ENCODE measurements at regions of chr2 and their contacts with region 1.

Region 1: GRCh38 chr2:44361330-44362206 is at the starts of genes CAMKMT and PREPL:
- DNase-seq: peak; percentile 97 to 99 (median 98)
- ATAC-seq: peak; percentile 85
- H3K4me3 ChIP-seq: peak within 1 kb of the TSS; percentile 89
- H3K4me3 Mint-ChIP-seq: peak within 1 kb of the TSS; percentile 98
- H3K27ac ChIP-seq: peak within 1 kb of the TSS; percentile 95 to 100
- H3K27ac Mint-ChIP-seq: peak within 1 kb of the TSS; percentile 99
- H3K4me1 ChIP-seq: peaks cover 26% of the 10 kb centered on the region
- H3K4me1 Mint-ChIP-seq: peaks cover 64% of the 10 kb centered on the region
- H3K27me3 ChIP-seq: no peaks in the 10 kb centered on the region
- H3K27me3 Mint-ChIP-seq: no peaks in the 10 kb centered on the region
- CTCF ChIP-seq: no peak
- total RNA-seq, gene CAMKMT: 11.9 to 13.9 TPM
- total RNA-seq, gene PREPL: 30.0 to 31.4 TPM

Region 2: GRCh38 chr2:42810121-42810970 is 1551.2 kb before region 1 on chr2:
- CTCF ChIA-PET with region 1: no interaction called
- POLR2A ChIA-PET with region 1: interaction called, 22 read pairs
- intact Hi-C with region 1: loop called in 1 of 2 experiments (anchors 10 kb)
- DNase-seq: peak; percentile 92 to 99 (median 96)
- ATAC-seq: peak; percentile 78
- H3K4me3 ChIP-seq: peak overlapping the region; percentile 89
- H3K4me3 Mint-ChIP-seq: peak overlapping the region; percentile 98
- H3K27ac ChIP-seq: peak overlapping the region; percentile 93
- H3K27ac Mint-ChIP-seq: peak overlapping the region; percentile 100
- H3K4me1 ChIP-seq: peaks cover 27% of the 10 kb centered on the region
- H3K4me1 Mint-ChIP-seq: peaks cover 30% of the 10 kb centered on the region
- H3K27me3 ChIP-seq: no peaks in the 10 kb centered on the region
- H3K27me3 Mint-ChIP-seq: peaks cover 7% of the 10 kb centered on the region
- CTCF ChIP-seq: no peak

Region 3: GRCh38 chr2:43724728-43725526 is 636.6 kb before region 1 on chr2:
- CTCF ChIA-PET with region 1: no interaction called
- POLR2A ChIA-PET with region 1: no interaction called
- intact Hi-C with region 1: no loop called
- DNase-seq: no peak
- ATAC-seq: no peak
- H3K4me3 ChIP-seq: no peak overlapping the region
- H3K4me3 Mint-ChIP-seq: no peak overlapping the region
- H3K27ac ChIP-seq: no peak overlapping the region
- H3K27ac Mint-ChIP-seq: no peak overlapping the region
- H3K4me1 ChIP-seq: no peaks in the 10 kb centered on the region
- H3K4me1 Mint-ChIP-seq: no peaks in the 10 kb centered on the region
- H3K27me3 ChIP-seq: no peaks in the 10 kb centered on the region
- H3K27me3 Mint-ChIP-seq: peaks cover 4% of the 10 kb centered on the region
- CTCF ChIP-seq: no peak

Region 4: DNA sequence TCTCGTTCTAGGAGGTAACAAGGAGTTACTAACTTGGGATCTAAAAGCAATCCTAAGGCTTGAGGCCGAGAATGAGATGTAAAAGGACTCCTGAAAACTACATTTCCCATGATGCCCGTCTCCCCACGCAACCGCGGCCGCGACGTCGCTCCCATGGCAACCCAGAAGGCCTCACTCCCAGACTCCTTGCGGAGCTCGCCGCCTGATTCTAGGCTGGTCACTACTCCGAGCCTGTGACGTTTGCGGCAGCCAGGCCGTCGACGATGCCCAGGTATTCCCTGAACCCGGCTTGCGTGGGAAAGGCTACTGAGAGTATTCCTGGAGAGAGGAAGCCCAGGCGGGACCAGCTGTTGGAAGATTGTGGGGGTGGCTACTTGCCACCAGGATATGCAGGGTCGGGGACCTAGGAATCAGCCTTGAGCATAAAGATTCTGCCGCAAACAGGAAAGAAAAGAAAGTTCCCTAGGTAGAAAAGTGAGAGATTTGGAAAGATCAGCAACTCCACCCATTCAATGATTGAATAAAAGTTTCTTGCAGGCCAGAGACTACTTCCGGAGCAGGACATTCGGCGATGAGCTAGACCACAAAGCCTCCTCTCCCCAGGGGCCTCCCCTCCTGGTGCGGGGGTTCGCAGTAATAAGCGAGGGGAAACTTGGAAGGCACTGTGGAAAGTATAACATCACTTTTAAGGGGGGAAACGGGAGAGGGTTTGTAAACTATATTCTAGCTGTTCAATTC is 587.5 kb before region 1 on chr2 and contains the start of gene DYNC2LI1:
- CTCF ChIA-PET with region 1: no interaction called
- POLR2A ChIA-PET with region 1: no interaction called
- intact Hi-C with region 1: loop called in 1 of 2 experiments (anchors 10 kb)
- DNase-seq: peak; percentile 51 to 87 (median 66)
- ATAC-seq: peak; percentile 96
- H3K4me3 ChIP-seq: peak within 1 kb of the TSS; percentile 89
- H3K4me3 Mint-ChIP-seq: peak within 1 kb of the TSS; percentile 86
- H3K27ac ChIP-seq: no peak within 1 kb of the TSS
- H3K27ac Mint-ChIP-seq: peak within 1 kb of the TSS; percentile 19
- H3K4me1 ChIP-seq: peaks cover 11% of the 10 kb centered on the region
- H3K4me1 Mint-ChIP-seq: peaks cover 12% of the 10 kb centered on the region
- H3K27me3 ChIP-seq: no peaks in the 10 kb centered on the region
- H3K27me3 Mint-ChIP-seq: peaks cover 9% of the 10 kb centered on the region
- CTCF ChIP-seq: no peak
- total RNA-seq, gene DYNC2LI1: 2.1 to 2.2 TPM

Region 5: GRCh38 chr2:44167940-44168680 is 193.5 kb before region 1 on chr2:
- CTCF ChIA-PET with region 1: no interaction called
- POLR2A ChIA-PET with region 1: interaction called, 111 read pairs
- intact Hi-C with region 1: loop called (anchors 1 to 5 kb)
- DNase-seq: peak in 13 of 14 experiments; percentile 91 to 100 (median 95)
- ATAC-seq: peak; percentile 78
- H3K4me3 ChIP-seq: peak overlapping the region; percentile 61
- H3K4me3 Mint-ChIP-seq: peak overlapping the region; percentile 99
- H3K27ac ChIP-seq: peak overlapping the region; percentile 98
- H3K27ac Mint-ChIP-seq: peak overlapping the region; percentile 99
- H3K4me1 ChIP-seq: peaks cover 20% of the 10 kb centered on the region
- H3K4me1 Mint-ChIP-seq: peaks cover 36% of the 10 kb centered on the region
- H3K27me3 ChIP-seq: no peaks in the 10 kb centered on the region
- H3K27me3 Mint-ChIP-seq: no peaks in the 10 kb centered on the region
- CTCF ChIP-seq: no peak

Region 6: GRCh38 chr2:44348400-44348799 is 13.2 kb before region 1 on chr2:
- CTCF ChIA-PET with region 1: interaction called, 3 read pairs
- POLR2A ChIA-PET with region 1: interaction called, 12 read pairs
- intact Hi-C with region 1: no loop called
- DNase-seq: no peak
- ATAC-seq: no peak
- H3K4me3 ChIP-seq: no peak overlapping the region
- H3K4me3 Mint-ChIP-seq: no peak overlapping the region
- H3K27ac ChIP-seq: no peak overlapping the region
- H3K27ac Mint-ChIP-seq: no peak overlapping the region
- H3K4me1 ChIP-seq: no peaks in the 10 kb centered on the region
- H3K4me1 Mint-ChIP-seq: peaks cover 36% of the 10 kb centered on the region
- H3K27me3 ChIP-seq: no peaks in the 10 kb centered on the region
- H3K27me3 Mint-ChIP-seq: no peaks in the 10 kb centered on the region
- CTCF ChIP-seq: no peak

Region 7: DNA sequence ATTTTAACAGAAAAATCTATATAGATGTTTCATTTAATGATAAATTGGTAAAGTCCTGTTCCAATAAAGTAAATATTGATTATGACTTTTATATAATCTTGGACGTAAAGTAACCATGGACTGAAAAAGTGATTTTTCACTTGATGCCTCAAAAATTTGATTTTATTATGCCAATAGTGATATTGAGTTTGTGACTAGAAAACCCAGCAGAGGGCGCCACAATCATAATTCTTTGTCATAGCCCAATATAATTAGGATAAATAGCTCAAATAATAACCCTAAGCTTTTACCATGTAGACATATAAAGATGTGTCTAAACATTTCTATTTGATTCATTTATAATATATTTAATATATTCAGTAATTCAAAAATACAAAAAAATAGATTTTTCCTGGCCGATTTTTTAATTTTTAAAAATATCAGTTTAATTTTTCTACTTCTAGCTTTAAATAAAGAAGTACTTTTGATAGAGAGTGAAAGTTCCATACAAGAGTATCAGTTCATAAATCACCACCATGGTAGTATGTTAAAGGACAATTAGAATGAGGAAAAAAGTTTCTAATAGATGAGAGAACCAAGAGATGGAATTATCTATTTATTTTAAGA is 30.9 kb after region 1 on chr2:
- CTCF ChIA-PET with region 1: interaction called, 4 read pairs
- POLR2A ChIA-PET with region 1: interaction called, 18 read pairs
- intact Hi-C with region 1: no loop called
- DNase-seq: peak; percentile 13 to 69 (median 38)
- ATAC-seq: no peak
- H3K4me3 ChIP-seq: no peak overlapping the region
- H3K4me3 Mint-ChIP-seq: no peak overlapping the region
- H3K27ac ChIP-seq: no peak overlapping the region
- H3K27ac Mint-ChIP-seq: no peak overlapping the region
- H3K4me1 ChIP-seq: no peaks in the 10 kb centered on the region
- H3K4me1 Mint-ChIP-seq: peaks cover 9% of the 10 kb centered on the region
- H3K27me3 ChIP-seq: no peaks in the 10 kb centered on the region
- H3K27me3 Mint-ChIP-seq: no peaks in the 10 kb centered on the region
- CTCF ChIP-seq: peak; percentile 83

Region 8: GRCh38 chr2:44490726-44491125 is 129.2 kb after region 1 on chr2:
- CTCF ChIA-PET with region 1: no interaction called
- POLR2A ChIA-PET with region 1: no interaction called
- intact Hi-C with region 1: no loop called
- DNase-seq: no peak
- ATAC-seq: no peak
- H3K4me3 ChIP-seq: no peak overlapping the region
- H3K4me3 Mint-ChIP-seq: no peak overlapping the region
- H3K27ac ChIP-seq: no peak overlapping the region
- H3K27ac Mint-ChIP-seq: no peak overlapping the region
- H3K4me1 ChIP-seq: no peaks in the 10 kb centered on the region
- H3K4me1 Mint-ChIP-seq: no peaks in the 10 kb centered on the region
- H3K27me3 ChIP-seq: no peaks in the 10 kb centered on the region
- H3K27me3 Mint-ChIP-seq: no peaks in the 10 kb centered on the region
- CTCF ChIP-seq: no peak

Region 9: GRCh38 chr2:44596537-44597320 is 235.2 kb after region 1 on chr2:
- CTCF ChIA-PET with region 1: no interaction called
- POLR2A ChIA-PET with region 1: no interaction called
- intact Hi-C with region 1: no loop called
- DNase-seq: no peak
- ATAC-seq: no peak
- H3K4me3 ChIP-seq: no peak overlapping the region
- H3K4me3 Mint-ChIP-seq: no peak overlapping the region
- H3K27ac ChIP-seq: no peak overlapping the region
- H3K27ac Mint-ChIP-seq: no peak overlapping the region
- H3K4me1 ChIP-seq: no peaks in the 10 kb centered on the region
- H3K4me1 Mint-ChIP-seq: no peaks in the 10 kb centered on the region
- H3K27me3 ChIP-seq: no peaks in the 10 kb centered on the region
- H3K27me3 Mint-ChIP-seq: no peaks in the 10 kb centered on the region
- CTCF ChIP-seq: no peak

Region 10: GRCh38 chr2:45567974-45568789 is 1206.6 kb after region 1 on chr2:
- CTCF ChIA-PET with region 1: no interaction called
- POLR2A ChIA-PET with region 1: interaction called, 5 read pairs
- intact Hi-C with region 1: loop called in 1 of 2 experiments (anchors 10 kb)
- DNase-seq: peak in 4 of 14 experiments; percentile 7 to 91 (median 86)
- ATAC-seq: peak; percentile 97
- H3K4me3 ChIP-seq: peak overlapping the region; percentile 55
- H3K4me3 Mint-ChIP-seq: peak overlapping the region; percentile 87
- H3K27ac ChIP-seq: peak overlapping the region; percentile 58 to 85
- H3K27ac Mint-ChIP-seq: peak overlapping the region; percentile 87
- H3K4me1 ChIP-seq: peaks cover 12% of the 10 kb centered on the region
- H3K4me1 Mint-ChIP-seq: peaks cover 47% of the 10 kb centered on the region
- H3K27me3 ChIP-seq: no peaks in the 10 kb centered on the region
- H3K27me3 Mint-ChIP-seq: no peaks in the 10 kb centered on the region
- CTCF ChIP-seq: no peak